Transverse colon (tissue), 4 donors: ENCODE measurements at regions of chr10 and their contacts with region 1.

Region 1: GRCh38 chr10:49552249-49552672 is 13.3 kb upstream of the ERCC6 start:
- DNase-seq: no peak
- H3K4me3 ChIP-seq: no peak overlapping the region
- H3K27ac ChIP-seq: no peak overlapping the region
- H3K4me1 ChIP-seq: no peaks in the 10 kb centered on the region
- H3K27me3 ChIP-seq: peaks cover 4% of the 10 kb centered on the region
- CTCF ChIP-seq: no peak
- EP300 ChIP-seq: no peak
- POLR2A ChIP-seq: no peak

Region 2: DNA sequence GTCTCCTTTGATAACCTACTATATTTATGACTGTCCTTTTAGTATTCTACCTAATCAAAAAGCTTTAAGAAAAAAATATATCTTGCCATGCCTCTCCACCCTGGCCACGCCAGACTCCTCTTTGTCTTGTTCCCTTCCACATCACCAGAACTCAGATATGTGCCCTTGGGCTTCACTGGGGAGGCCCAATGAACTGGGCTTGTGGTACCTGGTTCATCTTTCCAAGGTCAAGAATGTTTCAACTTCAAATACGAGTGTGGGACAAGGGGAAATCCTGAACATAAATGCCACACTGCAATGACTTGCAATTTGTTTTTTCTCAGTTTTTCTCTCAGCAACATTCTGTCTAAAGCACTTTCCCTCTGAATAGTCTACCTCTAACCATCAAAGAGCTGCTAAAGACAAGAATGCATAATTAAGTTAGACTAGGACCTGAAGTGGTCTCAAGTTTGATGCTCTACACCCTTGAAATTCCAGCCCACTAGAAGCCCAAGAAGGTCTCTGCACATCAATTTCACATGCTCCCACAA is 23.2 kb before region 1 on chr10:
- in situ Hi-C with region 1: no loop called
- intact Hi-C with region 1: loop called (anchors 1 kb)
- DNase-seq: no peak
- H3K4me3 ChIP-seq: no peak overlapping the region
- H3K27ac ChIP-seq: no peak overlapping the region
- H3K4me1 ChIP-seq: no peaks in the 10 kb centered on the region
- H3K27me3 ChIP-seq: no peaks in the 10 kb centered on the region
- CTCF ChIP-seq: no peak
- EP300 ChIP-seq: no peak
- POLR2A ChIP-seq: no peak

Region 3: DNA sequence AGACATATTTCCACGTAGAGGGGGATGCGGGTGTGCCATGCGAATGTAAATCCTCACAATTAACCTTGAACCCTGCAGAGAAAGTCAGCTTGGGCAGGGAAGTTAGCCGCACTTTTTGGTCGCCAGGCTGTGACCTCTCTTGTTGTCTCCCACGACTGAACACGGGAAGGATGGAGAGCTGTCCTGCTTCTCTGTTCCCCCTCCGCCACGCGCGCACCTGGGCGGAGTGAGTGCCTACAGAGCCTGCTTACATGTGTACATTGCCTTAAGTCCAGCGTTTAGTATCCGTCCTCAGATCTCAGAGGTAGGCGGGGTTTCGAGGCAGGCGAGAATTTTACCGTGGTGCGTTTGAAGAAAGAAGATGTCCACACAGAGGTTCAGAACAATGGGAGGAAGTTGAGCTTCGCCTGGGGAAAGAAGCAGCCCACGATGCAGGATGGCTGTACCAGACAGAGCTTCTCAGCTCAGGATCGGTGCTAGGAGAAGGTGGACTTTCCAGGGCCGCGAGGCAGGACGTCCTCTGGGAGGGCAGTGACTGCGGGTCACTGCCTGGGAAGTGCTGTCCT is 12.9 kb before region 1 on chr10:
- in situ Hi-C with region 1: no loop called
- intact Hi-C with region 1: no loop called
- DNase-seq: peak; percentile 57
- H3K4me3 ChIP-seq: peak overlapping the region; percentile 20 to 82 (median 70)
- H3K27ac ChIP-seq: peak overlapping the region; percentile 85 to 94 (median 92)
- H3K4me1 ChIP-seq: peaks cover 7 to 24% (median 14%) of the 10 kb centered on the region in 4 donors
- H3K27me3 ChIP-seq: peaks cover 4% of the 10 kb centered on the region
- CTCF ChIP-seq: peak in 1 of 5 experiments; percentile 6
- EP300 ChIP-seq: no peak
- POLR2A ChIP-seq: no peak